ENCODE measurements at regions of chr12 and their contacts with region 1.

Region 1: GRCh38 chr12:111444925-111445725 is 39.4 kb downstream of the SH2B3 start:
- DNase-seq: peak; percentile 95
- H3K4me3 Mint-ChIP-seq: peak overlapping the region; percentile 36
- H3K27ac Mint-ChIP-seq: peak overlapping the region; percentile 77
- H3K4me1 Mint-ChIP-seq: peaks cover 82% of the 10 kb centered on the region
- H3K27me3 Mint-ChIP-seq: no peaks in the 10 kb centered on the region

Region 2: GRCh38 chr12:110998165-110998564 is 447.0 kb before region 1 on chr12:
- CTCF ChIA-PET with region 1: no interaction called
- POLR2A ChIA-PET with region 1: no interaction called
- intact Hi-C with region 1: no loop called
- DNase-seq: no peak
- H3K4me3 Mint-ChIP-seq: no peak overlapping the region
- H3K27ac Mint-ChIP-seq: no peak overlapping the region
- H3K4me1 Mint-ChIP-seq: no peaks in the 10 kb centered on the region
- H3K27me3 Mint-ChIP-seq: peaks cover 10% of the 10 kb centered on the region

Region 3: DNA sequence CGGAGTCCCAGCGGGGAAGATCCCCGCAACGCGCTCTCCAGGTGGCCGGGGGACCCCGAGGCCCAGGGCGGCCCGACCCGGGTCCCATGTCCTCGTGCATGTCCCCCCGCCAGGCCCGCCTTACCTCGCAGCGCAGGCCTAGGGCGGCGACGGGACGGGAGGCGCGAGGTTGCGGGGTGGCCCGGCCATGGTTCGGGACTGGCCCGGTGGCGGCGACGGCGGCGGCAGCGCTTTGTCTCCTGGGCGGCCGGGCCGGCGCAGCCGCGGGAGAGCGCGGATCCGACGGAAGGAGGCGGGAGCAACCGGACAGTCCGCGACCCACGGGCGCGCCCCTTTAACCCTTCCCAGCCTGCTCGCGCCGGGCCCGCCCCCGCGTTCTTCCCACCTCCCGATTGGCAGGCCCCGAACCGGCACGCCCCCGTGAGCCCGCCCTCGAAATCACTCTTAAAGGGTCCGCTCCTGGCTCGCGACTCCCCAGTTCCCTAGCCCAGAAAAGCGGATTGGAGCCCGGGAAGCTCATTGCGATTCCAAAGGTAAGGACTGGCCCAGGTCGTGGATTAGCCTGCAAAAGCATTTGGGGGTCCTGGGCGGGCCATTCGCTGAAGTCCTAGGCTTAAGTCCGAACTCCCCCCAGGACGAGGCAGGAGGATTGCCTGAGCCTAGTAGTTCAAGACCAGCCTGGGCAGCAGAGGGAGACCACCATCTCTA is 76.2 kb before region 1 on chr12 and contains the start of gene PHETA1:
- CTCF ChIA-PET with region 1: interaction called, 3 read pairs
- POLR2A ChIA-PET with region 1: no interaction called
- intact Hi-C with region 1: loop called (anchors 2 kb)
- DNase-seq: peak; percentile 86
- H3K4me3 Mint-ChIP-seq: peak within 1 kb of the TSS; percentile 74
- H3K27ac Mint-ChIP-seq: no peak within 1 kb of the TSS
- H3K4me1 Mint-ChIP-seq: peaks cover 18% of the 10 kb centered on the region
- H3K27me3 Mint-ChIP-seq: no peaks in the 10 kb centered on the region
- total RNA-seq, gene PHETA1: 1.4 to 2.2 TPM

Region 4: GRCh38 chr12:111428728-111429175 is 16.4 kb before region 1 on chr12:
- CTCF ChIA-PET with region 1: interaction called, 46 read pairs
- POLR2A ChIA-PET with region 1: interaction called, 42 read pairs
- intact Hi-C with region 1: loop called (anchors 1 kb)
- DNase-seq: peak; percentile 50
- H3K4me3 Mint-ChIP-seq: peak overlapping the region; percentile 74
- H3K27ac Mint-ChIP-seq: peak overlapping the region; percentile 80
- H3K4me1 Mint-ChIP-seq: peaks cover 90% of the 10 kb centered on the region
- H3K27me3 Mint-ChIP-seq: no peaks in the 10 kb centered on the region

Region 5: DNA sequence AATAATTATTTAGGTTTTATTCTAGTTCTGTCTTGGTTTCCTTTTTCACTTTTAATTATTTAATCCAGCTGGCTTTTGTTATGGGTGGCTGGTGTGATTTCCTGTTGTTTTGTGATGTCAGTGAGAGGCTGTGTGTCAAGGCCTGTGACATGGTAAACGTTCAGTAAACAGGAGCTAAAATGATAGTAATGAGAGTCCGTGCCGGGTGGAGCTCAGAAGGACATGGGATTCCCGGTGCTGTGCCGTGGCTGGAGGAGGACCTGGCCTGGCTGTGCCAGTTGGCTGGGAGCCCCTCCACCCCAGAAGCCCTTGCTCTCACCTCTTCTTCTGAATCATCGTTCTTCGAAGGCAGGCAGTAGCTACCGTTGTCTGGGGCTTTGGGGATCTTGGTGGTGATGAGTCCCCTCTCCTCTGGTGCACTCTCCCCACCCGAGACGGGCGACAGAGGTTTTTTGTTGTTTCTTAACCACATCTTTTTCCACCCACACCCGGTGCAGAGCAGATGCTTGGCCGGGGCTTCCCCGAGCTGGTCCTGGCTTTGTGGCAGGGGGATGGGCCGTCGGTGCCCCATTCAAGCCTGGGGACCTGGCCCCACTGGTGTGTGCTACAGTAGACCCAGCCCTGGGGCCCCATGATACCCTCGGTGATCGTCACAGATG is 10.3 kb before region 1 on chr12:
- CTCF ChIA-PET with region 1: interaction called, 46 read pairs
- POLR2A ChIA-PET with region 1: interaction called, 42 read pairs
- intact Hi-C with region 1: loop called (anchors 1 kb)
- DNase-seq: peak; percentile 91
- H3K4me3 Mint-ChIP-seq: peak overlapping the region; percentile 61
- H3K27ac Mint-ChIP-seq: peak overlapping the region; percentile 92
- H3K4me1 Mint-ChIP-seq: peaks cover 89% of the 10 kb centered on the region
- H3K27me3 Mint-ChIP-seq: no peaks in the 10 kb centered on the region

Region 6: GRCh38 chr12:111685744-111686517 is 240.8 kb after region 1 on chr12 and contains the starts of genes ACAD10 and BRAP:
- CTCF ChIA-PET with region 1: no interaction called
- POLR2A ChIA-PET with region 1: no interaction called
- intact Hi-C with region 1: loop called (anchors 10 kb)
- DNase-seq: peak; percentile 97
- H3K4me3 Mint-ChIP-seq: peak within 1 kb of the TSS; percentile 95
- H3K27ac Mint-ChIP-seq: peak within 1 kb of the TSS; percentile 89
- H3K4me1 Mint-ChIP-seq: peaks cover 32% of the 10 kb centered on the region
- H3K27me3 Mint-ChIP-seq: peaks cover 2% of the 10 kb centered on the region
- total RNA-seq, gene ACAD10: 22.5 to 24.2 TPM
- total RNA-seq, gene BRAP: 16.8 to 18.0 TPM